ENCODE measurements at regions of chr5 and their contacts with region 1.

Region 1: DNA sequence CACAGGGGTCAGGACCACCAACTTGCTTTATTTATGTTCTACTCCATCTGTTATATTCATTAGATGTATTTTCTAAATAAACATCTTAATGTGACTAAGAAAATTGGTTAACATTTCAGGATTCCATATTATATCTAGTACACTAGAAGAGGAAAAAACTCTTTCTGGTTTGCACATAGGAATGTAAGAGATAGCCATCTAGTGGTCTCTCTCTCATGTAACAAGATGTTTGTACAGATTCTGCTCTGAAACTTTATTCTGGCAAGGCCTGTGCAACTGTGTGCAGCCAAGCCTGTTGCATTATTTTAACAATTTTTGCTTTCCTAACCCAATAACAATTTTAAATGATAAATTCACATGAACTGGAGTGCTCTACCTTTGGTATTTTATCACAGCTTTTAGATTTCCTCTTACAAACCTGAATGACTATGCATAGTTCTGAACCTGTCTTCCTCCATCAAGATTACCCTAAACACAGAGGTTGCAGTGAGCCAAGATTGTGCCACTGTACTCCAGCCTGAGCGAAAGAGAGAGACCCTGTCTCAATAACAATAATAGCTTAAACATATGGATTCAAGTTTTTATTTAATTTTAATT is 148.1 kb downstream of the GIN1 start:
- DNase-seq: no peak
- H3K4me3 ChIP-seq: no peak overlapping the region
- H3K27ac ChIP-seq: no peak overlapping the region
- H3K4me1 ChIP-seq: no peaks in the 10 kb centered on the region
- H3K27me3 ChIP-seq: no peaks in the 10 kb centered on the region
- CTCF ChIP-seq: peak in 3 of 4 experiments; percentile 37 to 47 (median 43)
- POLR2A ChIP-seq: no peak

Region 2: DNA sequence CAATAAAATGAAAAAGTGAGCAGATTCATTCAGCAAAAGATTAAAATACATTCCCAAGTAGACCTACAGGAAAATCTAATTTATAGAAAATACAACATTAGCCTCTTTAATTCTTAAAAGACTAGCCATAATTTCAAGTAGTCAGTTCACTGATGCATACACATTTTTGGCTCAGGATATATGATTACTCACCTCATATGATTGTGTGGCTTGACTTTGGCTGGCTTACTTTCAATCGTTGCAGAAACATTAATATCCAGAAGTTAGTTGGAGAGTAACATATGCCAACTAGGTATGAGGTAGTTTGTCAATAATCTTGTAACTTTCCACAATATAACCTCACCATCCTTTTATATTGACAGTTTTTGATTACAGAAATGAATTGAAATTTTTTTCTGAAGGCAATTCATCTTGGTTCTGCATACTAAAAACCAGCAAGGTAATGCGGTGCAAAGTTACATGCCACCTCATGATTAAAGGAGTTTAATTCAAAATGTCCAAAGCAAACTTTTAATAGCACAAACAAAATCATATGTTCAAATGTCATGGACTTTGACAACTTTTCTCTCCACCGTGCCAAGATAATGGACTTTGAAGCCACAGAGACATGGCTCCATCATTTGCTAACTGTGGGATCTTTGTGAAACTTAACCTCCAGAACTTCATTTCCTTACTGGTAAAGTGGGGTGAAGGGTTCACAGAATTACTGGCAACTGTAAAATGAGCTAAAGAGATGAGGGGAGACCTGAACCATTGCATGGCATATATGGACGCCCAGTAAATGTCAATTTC is 293.3 kb before region 1 on chr5:
- intact Hi-C with region 1: loop called (anchors 5 kb)
- DNase-seq: no peak
- H3K4me3 ChIP-seq: no peak overlapping the region
- H3K27ac ChIP-seq: no peak overlapping the region
- H3K4me1 ChIP-seq: no peaks in the 10 kb centered on the region
- H3K27me3 ChIP-seq: no peaks in the 10 kb centered on the region
- CTCF ChIP-seq: no peak
- POLR2A ChIP-seq: no peak

Measured in prostate gland (tissue), 2 donors.